SK-N-SH (cell line): ENCODE measurements at regions of chr6 and their contacts with region 1.

Region 1: GRCh38 chr6:136989571-136990241 is 55.1 kb downstream of the IL20RA start:
- DNase-seq: peak; percentile 87
- H3K4me3 ChIP-seq: peak overlapping the region; percentile 42 to 49
- H3K27ac ChIP-seq: peak overlapping the region in 1 of 2 experiments; percentile 100; a peak in 2 of 4 replicates
- H3K4me1 ChIP-seq: peaks cover 0 to 32% of the 10 kb centered on the region in 2 experiments; a peak in 2 of 4 replicates
- H3K27me3 ChIP-seq: peaks cover 9% of the 10 kb centered on the region; the same call in 1 of the 2 replicates
- CTCF ChIP-seq: no peak
- EP300 ChIP-seq: 0 out of 4 replicates have a peak, but pooled peaks of 1 of the 2 experiments have one; percentile 8
- RAD21 ChIP-seq: no peak

Region 2: GRCh38 chr6:137043710-137044365 is 54.1 kb after region 1 on chr6:
- CTCF ChIA-PET with region 1: interaction called, 3 read pairs
- POLR2A ChIA-PET with region 1: interaction called, 14 read pairs
- DNase-seq: no peak
- H3K4me3 ChIP-seq: peak overlapping the region; percentile 63 to 72
- H3K27ac ChIP-seq: peak overlapping the region in 1 of 2 experiments; percentile 84; a peak in 2 of 4 replicates
- H3K4me1 ChIP-seq: peaks cover 0 to 3% of the 10 kb centered on the region in 2 experiments; a peak in 2 of 4 replicates
- H3K27me3 ChIP-seq: peaks cover 15% of the 10 kb centered on the region; the same call in 1 of the 2 replicates
- CTCF ChIP-seq: no peak
- EP300 ChIP-seq: no peak
- RAD21 ChIP-seq: no peak

Region 3: DNA sequence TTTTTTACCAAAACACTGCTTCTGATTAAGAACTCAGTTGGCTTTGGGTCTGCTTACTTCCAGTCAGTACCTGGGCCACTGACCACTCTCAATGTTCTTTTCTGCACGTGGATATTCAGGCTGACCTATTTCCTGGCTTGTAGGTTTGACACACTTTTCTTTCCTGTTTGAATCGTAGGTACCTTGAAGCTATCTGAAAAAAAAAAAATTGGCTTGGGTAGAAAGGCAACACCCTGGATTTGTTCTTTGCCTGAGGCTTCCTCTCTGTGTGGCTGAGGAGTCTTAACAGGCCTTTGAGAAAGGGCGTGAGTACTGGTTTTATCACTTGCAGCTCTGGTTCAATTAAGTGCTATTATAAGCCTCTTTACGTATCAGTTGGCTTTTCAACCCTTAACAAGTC is 115.7 kb after region 1 on chr6:
- CTCF ChIA-PET with region 1: no interaction called
- POLR2A ChIA-PET with region 1: no interaction called
- DNase-seq: no peak
- H3K4me3 ChIP-seq: no peak overlapping the region
- H3K27ac ChIP-seq: no peak overlapping the region
- H3K4me1 ChIP-seq: no peaks in the 10 kb centered on the region
- H3K27me3 ChIP-seq: no peaks in the 10 kb centered on the region
- CTCF ChIP-seq: no peak
- EP300 ChIP-seq: no peak
- RAD21 ChIP-seq: no peak